ENCODE measurements at regions of chr12 and their contacts with region 1.

Region 1: DNA sequence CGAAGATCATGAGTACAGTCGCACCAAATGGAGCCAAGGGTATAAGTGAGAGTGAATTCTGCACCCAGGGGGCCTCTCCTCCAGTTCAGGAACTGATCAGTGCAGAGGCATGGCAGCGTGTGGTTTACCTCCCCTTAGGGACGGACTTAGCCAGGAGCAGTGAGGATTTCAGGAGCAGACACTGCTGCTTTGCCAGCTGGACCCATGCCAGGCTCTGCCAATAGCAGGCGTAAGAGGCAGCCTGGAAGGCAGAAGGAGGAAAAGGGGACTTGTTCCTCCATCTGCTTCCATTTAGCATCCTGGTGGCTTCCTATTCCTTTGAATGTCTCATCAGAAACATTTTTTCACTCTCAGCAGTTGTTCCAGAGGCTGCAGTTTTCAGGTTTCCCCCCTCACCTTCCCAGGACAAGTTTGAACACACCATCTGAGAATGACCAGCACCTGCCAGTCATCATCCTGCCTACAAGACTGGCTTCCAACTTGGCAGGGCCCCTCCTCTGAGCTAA is 137.0 kb upstream of the LMNTD1 start:
- DNase-seq: no peak
- H3K4me3 ChIP-seq: no peak overlapping the region
- H3K27ac ChIP-seq: no peak overlapping the region
- H3K4me1 ChIP-seq: no peaks in the 10 kb centered on the region
- H3K27me3 ChIP-seq: no peaks in the 10 kb centered on the region
- CTCF ChIP-seq: no peak

Region 2: DNA sequence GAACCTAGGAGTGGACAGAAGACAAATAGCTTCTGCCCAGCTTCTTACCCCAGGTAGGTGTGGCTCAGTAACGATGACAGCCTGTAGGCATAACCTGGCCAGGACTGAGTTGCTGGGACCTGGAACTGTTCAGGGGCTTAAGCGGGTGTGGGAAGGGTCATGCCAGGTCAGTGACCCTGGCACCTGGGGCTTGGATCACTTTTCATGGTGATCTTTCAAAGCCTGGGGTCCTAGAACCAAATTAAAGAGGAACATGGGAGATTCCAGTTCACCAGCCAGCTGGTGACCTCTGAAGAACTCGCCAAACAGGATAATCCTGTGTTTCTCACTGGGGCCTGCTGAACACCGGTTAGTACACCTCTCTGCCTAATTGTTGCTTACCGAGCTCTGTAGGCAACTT is 34.4 kb before region 1 on chr12:
- CTCF ChIA-PET with region 1: no interaction called
- POLR2A ChIA-PET with region 1: no interaction called
- intact Hi-C with region 1: loop called (anchors 1 kb)
- DNase-seq: peak; percentile 65 to 70
- H3K4me3 ChIP-seq: no peak overlapping the region
- H3K27ac ChIP-seq: peak overlapping the region; percentile 33; the same call in 1 of the 2 replicates
- H3K4me1 ChIP-seq: peaks cover 20% of the 10 kb centered on the region
- H3K27me3 ChIP-seq: no peaks in the 10 kb centered on the region
- CTCF ChIP-seq: no peak

Region 3: GRCh38 chr12:25734529-25735180 is 44.6 kb after region 1 on chr12:
- CTCF ChIA-PET with region 1: no interaction called
- POLR2A ChIA-PET with region 1: no interaction called
- intact Hi-C with region 1: no loop called
- DNase-seq: no peak
- H3K4me3 ChIP-seq: no peak overlapping the region
- H3K27ac ChIP-seq: no peak overlapping the region
- H3K4me1 ChIP-seq: no peaks in the 10 kb centered on the region
- H3K27me3 ChIP-seq: no peaks in the 10 kb centered on the region
- CTCF ChIP-seq: no peak

Measured in PC-9 (cell line).